ENCODE measurements at regions of chr3 and their contacts with region 1.

Region 1: GRCh38 chr3:113695786-113696645 is at the start of gene USF3:
- DNase-seq: peak; percentile 77 to 92 (median 91)
- ATAC-seq: peak; percentile 89 to 90
- H3K4me3 ChIP-seq: peak within 1 kb of the TSS; percentile 95
- H3K27ac ChIP-seq: peak within 1 kb of the TSS; percentile 98
- H3K4me1 ChIP-seq: peaks cover 3% of the 10 kb centered on the region
- H3K27me3 ChIP-seq: no peaks in the 10 kb centered on the region
- total RNA-seq, gene USF3: 13.4 to 15.4 (median 14.4) TPM

Region 2: DNA sequence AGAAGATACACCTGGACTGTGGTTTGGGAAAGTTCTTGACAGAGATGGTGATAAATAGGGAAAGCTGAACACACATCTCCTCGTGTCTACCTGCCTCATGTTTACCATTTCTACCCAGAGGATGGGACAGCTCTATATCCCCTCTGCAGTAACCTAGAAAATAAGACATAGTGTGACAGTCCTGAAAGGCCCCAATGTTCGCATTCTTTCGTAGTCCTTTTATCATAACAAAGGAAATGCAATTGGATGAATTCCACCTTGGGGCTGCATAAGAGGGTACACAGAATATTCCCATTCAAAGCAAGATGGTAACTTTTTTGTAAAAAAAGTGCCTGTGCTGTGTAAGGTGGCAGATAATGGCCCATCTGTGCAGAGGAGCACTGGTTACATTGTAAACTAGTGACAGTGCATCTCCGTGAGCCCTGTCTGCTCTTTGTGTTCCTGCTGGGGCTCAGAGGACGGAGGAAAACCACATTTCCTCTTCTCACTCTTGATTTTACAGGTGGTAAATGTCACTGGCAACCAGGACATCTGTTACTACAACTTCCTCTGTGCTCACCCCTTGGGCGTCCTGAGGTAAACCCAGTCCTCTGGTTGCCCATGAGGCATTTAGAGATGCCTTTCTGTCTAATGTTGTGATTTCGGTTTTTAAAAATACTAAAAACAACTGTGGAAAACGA is 89.3 kb before region 1 on chr3:
- intact Hi-C with region 1: no loop called
- DNase-seq: no peak
- ATAC-seq: no peak
- H3K4me3 ChIP-seq: no peak overlapping the region
- H3K27ac ChIP-seq: no peak overlapping the region
- H3K4me1 ChIP-seq: no peaks in the 10 kb centered on the region
- H3K27me3 ChIP-seq: no peaks in the 10 kb centered on the region

Region 3: GRCh38 chr3:113617726-113618125 is 78.3 kb before region 1 on chr3:
- intact Hi-C with region 1: loop called in 1 of 4 experiments (anchors 2 kb)
- DNase-seq: no peak
- ATAC-seq: no peak
- H3K4me3 ChIP-seq: no peak overlapping the region
- H3K27ac ChIP-seq: no peak overlapping the region
- H3K4me1 ChIP-seq: peaks cover 2% of the 10 kb centered on the region
- H3K27me3 ChIP-seq: no peaks in the 10 kb centered on the region

Measured in right cardiac atrium (tissue), 5 donors.